Sigmoid colon (tissue), 7 donors: ENCODE measurements at regions of chr1 and their contacts with region 1.

Region 1: DNA sequence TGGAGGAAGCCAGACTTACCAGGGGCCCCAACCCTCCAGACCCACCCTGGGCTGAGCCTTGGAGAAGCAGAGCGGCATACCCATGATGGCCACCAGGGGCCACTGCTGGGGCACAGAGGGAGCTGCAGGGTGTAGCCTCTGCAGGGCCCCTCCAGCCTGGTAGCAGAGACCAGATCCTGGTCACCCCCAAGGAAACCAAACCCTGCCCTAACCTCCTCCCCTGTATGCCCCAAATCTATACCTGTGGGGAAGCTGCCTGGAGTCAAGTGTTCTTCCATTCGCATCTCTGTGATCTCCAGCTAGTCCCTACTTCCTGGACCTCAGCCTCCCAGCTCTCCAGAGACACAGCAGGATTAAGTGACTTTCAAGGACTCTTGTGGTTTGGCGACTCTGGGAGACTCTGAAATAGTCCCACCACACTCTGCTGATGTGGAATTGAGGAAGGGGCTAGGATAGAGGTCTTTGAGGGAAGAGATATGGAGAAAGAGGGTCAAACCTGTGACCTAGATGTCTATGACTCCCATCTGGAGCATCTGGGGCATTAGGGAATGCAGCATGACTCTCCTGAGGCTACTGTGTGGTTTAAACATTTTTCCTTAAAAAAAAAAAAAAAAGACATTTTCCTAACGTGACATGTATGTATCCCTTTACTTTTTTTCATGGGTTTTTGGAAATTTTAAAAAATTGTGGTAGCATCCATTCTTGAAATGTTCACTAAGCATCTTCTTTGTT is 119.2 kb upstream of the IPO9 start:
- DNase-seq: peak; percentile 90
- H3K4me3 ChIP-seq: no peak overlapping the region
- H3K27ac ChIP-seq: peak overlapping the region in 3 of 4 donors; percentile 36 to 96 (median 84)
- H3K4me1 ChIP-seq: peaks cover 0 to 73% (median 57%) of the 10 kb centered on the region in 4 donors
- H3K27me3 ChIP-seq: no peaks in the 10 kb centered on the region
- CTCF ChIP-seq: peak; percentile 93 to 97 (median 94)
- EP300 ChIP-seq: no peak
- POLR2A ChIP-seq: no peak

Region 2: DNA sequence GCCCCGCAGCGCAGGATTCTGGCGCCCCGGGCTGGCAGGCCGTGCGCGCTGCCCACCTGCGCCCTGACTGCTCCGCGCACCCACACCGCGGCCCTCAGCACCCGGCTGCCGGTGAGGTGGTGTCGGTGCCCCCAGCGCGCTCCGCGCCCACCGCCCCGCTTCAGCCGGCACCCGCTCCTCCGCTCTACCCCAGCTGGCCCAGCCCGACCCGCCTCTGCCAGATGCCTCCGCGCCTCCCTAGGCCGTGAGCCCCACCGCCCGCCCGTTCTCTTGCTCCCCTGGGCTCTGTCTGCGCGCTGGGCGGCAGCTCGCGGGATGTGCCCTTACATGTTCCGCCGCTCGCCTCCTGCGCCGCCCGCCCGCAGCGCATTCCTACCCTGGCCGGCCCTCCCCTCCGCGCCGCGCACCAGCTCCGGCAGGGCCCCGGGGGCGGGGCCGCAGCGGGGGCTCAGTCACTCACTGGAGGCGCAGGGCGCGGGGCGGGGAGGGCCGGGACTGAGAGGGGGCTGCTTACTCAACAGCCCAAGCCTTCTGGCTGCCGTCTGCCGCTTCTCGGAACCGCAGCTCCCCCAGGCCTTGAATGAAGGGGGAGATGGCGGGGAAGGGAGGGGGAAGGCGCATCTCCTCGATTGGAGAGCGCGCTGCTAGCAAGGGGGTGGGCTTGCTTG is 240.8 kb before region 1 on chr1 and contains the start of gene PHLDA3:
- intact Hi-C with region 1: loop called (anchors 10 kb)
- DNase-seq: peak; percentile 98
- H3K4me3 ChIP-seq: peak within 1 kb of the TSS; percentile 65 to 100 (median 94)
- H3K27ac ChIP-seq: peak within 1 kb of the TSS; percentile 94 to 100 (median 98)
- H3K4me1 ChIP-seq: peaks cover 0 to 52% (median 41%) of the 10 kb centered on the region in 4 donors
- H3K27me3 ChIP-seq: no peaks in the 10 kb centered on the region
- CTCF ChIP-seq: no peak
- EP300 ChIP-seq: peak in 1 of 4 donors; percentile 40
- POLR2A ChIP-seq: peak; percentile 82 to 92
- total RNA-seq, gene PHLDA3: 93.4 to 135 (median 108) TPM

Region 3: DNA sequence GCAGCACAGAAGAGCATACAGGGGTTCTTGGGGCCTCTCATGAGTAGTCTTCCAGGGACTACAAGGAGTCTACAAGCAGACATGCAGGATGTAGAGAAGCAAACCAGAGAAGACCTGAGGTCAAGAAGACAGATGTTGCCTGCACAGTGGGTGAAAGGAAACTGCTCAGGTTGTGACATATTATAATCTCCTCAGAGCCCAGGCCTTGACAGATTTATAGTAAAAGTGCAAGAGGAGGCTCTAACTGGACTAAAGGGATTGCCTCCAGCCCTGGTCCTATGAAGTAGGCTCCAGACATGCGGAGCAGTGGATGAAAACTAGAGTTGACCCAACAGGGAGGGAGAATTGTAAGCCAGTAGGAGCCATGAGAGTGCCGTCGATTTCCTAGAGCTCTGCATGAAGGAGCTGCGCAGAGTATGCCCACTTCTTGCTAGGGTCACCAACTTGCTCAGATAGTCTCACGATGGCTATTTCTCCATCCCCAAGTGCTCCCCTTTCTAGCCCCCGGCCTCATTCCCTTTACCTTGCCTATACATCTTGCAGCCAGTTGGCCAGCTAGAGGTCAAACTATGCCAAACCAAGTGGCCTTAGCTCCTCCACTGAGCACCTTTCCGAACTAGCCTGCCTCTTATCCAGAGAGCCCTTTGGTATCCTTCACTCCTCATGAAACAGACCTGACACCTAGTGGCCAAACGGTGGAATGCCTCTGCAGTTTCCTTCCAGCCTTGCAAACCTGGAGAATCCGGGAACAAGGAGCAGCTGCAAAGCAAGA is 83.0 kb after region 1 on chr1:
- intact Hi-C with region 1: loop called (anchors 1 kb)
- DNase-seq: peak; percentile 90
- H3K4me3 ChIP-seq: no peak overlapping the region
- H3K27ac ChIP-seq: peak overlapping the region; percentile 59 to 76 (median 65)
- H3K4me1 ChIP-seq: peaks cover 0 to 38% (median 36%) of the 10 kb centered on the region in 4 donors
- H3K27me3 ChIP-seq: no peaks in the 10 kb centered on the region
- CTCF ChIP-seq: peak; percentile 89 to 99 (median 97)
- EP300 ChIP-seq: no peak
- POLR2A ChIP-seq: no peak

Region 4: DNA sequence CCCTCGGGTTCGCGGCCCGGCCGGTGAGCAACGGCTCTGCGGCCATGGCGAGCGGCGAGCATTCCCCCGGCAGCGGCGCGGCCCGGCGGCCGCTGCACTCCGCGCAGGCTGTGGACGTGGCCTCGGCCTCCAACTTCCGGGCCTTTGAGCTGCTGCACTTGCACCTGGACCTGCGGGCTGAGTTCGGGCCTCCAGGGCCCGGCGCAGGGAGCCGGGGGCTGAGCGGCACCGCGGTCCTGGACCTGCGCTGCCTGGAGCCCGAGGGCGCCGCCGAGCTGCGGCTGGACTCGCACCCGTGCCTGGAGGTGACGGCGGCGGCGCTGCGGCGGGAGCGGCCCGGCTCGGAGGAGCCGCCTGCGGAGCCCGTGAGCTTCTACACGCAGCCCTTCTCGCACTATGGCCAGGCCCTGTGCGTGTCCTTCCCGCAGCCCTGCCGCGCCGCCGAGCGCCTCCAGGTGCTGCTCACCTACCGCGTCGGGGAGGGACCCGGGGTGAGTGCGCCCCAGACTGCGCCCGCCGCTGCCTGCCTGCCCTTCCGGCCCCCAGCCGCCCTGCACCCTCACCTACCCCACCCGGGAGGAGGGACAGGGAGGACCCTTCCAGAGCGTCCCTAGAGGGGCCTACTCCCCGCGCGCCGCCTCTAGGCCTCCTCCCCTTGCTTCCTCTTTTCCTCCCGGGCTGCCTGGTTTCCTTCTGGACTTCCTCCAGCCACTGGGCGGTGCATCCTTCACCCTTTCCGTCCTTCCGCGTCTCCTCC is 273.1 kb after region 1 on chr1 and contains the start of gene RNPEP:
- intact Hi-C with region 1: loop called (anchors 10 kb)
- DNase-seq: peak; percentile 90
- H3K4me3 ChIP-seq: peak within 1 kb of the TSS; percentile 70 to 100 (median 96)
- H3K27ac ChIP-seq: peak within 1 kb of the TSS; percentile 92 to 96 (median 94)
- H3K4me1 ChIP-seq: peaks cover 0 to 18% (median 15%) of the 10 kb centered on the region in 4 donors
- H3K27me3 ChIP-seq: no peaks in the 10 kb centered on the region
- CTCF ChIP-seq: peak in 2 of 4 experiments; percentile 15 to 18
- EP300 ChIP-seq: no peak
- POLR2A ChIP-seq: no peak
- total RNA-seq, gene RNPEP: 23.9 to 38.5 (median 32.0) TPM